ENCODE measurements at regions of chr5 and their contacts with region 1.

Region 1: GRCh38 chr5:80998590-80998979 is 38.4 kb downstream of the RASGRF2 start:
- DNase-seq: no peak
- ATAC-seq: peak; percentile 62 to 64
- H3K4me3 Mint-ChIP-seq: peak overlapping the region; percentile 70 to 90 (median 80)
- H3K27ac Mint-ChIP-seq: peak overlapping the region; percentile 86 to 99 (median 93)
- H3K4me1 Mint-ChIP-seq: peaks cover 31 to 86% (median 81%) of the 10 kb centered on the region in 4 donors
- H3K27me3 Mint-ChIP-seq: no peaks in the 10 kb centered on the region

Region 2: GRCh38 chr5:80960531-80961375 is 37.8 kb before region 1 on chr5:
- POLR2A ChIA-PET with region 1: interaction called, 11 read pairs
- DNase-seq: peak; percentile 25 to 75 (median 51)
- ATAC-seq: peak; percentile 48 to 60
- H3K4me3 Mint-ChIP-seq: peak overlapping the region; percentile 92 to 97 (median 93)
- H3K27ac Mint-ChIP-seq: peak overlapping the region; percentile 61 to 93 (median 92)
- H3K4me1 Mint-ChIP-seq: peaks cover 26 to 66% (median 59%) of the 10 kb centered on the region in 4 donors
- H3K27me3 Mint-ChIP-seq: peaks cover 0 to 16% (median 0%) of the 10 kb centered on the region in 5 donors

Measured in naive thymus-derived CD8-positive, alpha-beta T cell (primary cell).